CD8-positive, alpha-beta memory T cell (primary cell): ENCODE measurements at regions of chr1 and their contacts with region 1.

Region 1: GRCh38 chr1:25037174-25038074 is 107.3 kb upstream of the RUNX3 start:
- DNase-seq: peak; percentile 25 to 77 (median 60)
- H3K4me3 ChIP-seq: no peak overlapping the region
- H3K4me3 Mint-ChIP-seq: peak overlapping the region in 5 of 7 donors; percentile 11 to 64 (median 36)
- H3K27ac ChIP-seq: no peak overlapping the region
- H3K27ac Mint-ChIP-seq: peak overlapping the region in 7 of 8 donors; percentile 49 to 87 (median 63)
- H3K4me1 ChIP-seq: peaks cover 62% of the 10 kb centered on the region
- H3K4me1 Mint-ChIP-seq: peaks cover 40 to 51% (median 49%) of the 10 kb centered on the region in 3 donors
- H3K27me3 ChIP-seq: no peaks in the 10 kb centered on the region
- H3K27me3 Mint-ChIP-seq: peaks cover 0 to 1% of the 10 kb centered on the region in 2 donors

Region 2: GRCh38 chr1:24909388-24909898 is 128.0 kb before region 1 on chr1:
- CTCF ChIA-PET with region 1: interaction called, 23 read pairs
- POLR2A ChIA-PET with region 1: interaction called, 3 read pairs
- DNase-seq: no peak
- H3K4me3 ChIP-seq: no peak overlapping the region
- H3K4me3 Mint-ChIP-seq: peak overlapping the region; percentile 11 to 79 (median 53)
- H3K27ac ChIP-seq: peak overlapping the region; percentile 94
- H3K27ac Mint-ChIP-seq: peak overlapping the region; percentile 97 to 100 (median 100)
- H3K4me1 ChIP-seq: peaks cover 96% of the 10 kb centered on the region
- H3K4me1 Mint-ChIP-seq: peaks cover 66 to 96% (median 75%) of the 10 kb centered on the region in 3 donors
- H3K27me3 ChIP-seq: no peaks in the 10 kb centered on the region
- H3K27me3 Mint-ChIP-seq: peaks cover 0 to 4% of the 10 kb centered on the region in 2 donors

Region 3: DNA sequence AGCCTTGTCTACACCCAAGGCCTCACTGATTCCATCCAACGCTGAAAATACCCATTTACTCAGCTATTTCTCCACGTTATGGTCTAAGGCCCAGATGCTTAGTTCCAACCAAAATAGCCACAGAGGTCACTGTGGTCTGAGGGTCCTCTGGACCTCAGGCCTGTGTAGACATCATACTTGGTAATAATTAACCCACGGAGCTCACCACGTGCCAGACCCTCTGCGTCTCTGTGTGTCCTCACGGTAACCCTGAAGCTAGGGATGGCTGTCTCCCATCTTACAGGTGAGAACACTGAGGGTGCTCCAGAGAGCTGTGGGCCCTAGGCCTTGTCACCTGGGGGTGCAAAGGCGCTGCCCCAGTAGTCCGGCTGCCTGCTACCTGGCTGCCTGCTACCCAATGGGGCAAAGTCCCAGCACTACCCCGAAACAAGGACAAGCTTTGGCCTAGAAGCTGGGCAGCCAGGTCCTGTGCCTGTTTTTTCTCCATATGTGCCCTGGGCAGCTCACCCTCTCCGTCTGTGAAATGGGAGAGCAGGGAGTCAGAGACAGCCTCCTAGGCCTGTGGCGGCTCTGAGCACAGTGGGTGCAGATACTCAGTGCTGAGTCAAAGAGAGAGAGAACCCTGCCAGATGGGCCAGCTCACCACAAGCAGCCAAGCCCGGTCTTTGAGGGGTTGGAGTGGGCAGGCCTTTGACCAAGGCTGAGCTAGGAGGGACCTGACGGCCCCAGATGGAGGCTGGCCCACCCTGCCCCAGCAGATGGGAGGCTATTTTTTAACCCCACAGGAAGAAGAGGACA is 90.4 kb before region 1 on chr1:
- CTCF ChIA-PET with region 1: interaction called, 15 read pairs
- POLR2A ChIA-PET with region 1: no interaction called
- DNase-seq: no peak
- H3K4me3 ChIP-seq: no peak overlapping the region
- H3K4me3 Mint-ChIP-seq: peak overlapping the region in 1 of 7 donors; percentile 31
- H3K27ac ChIP-seq: no peak overlapping the region
- H3K27ac Mint-ChIP-seq: peak overlapping the region in 6 of 8 donors; percentile 23 to 78 (median 68)
- H3K4me1 ChIP-seq: peaks cover 9% of the 10 kb centered on the region
- H3K4me1 Mint-ChIP-seq: peaks cover 34 to 81% (median 48%) of the 10 kb centered on the region in 3 donors
- H3K27me3 ChIP-seq: no peaks in the 10 kb centered on the region
- H3K27me3 Mint-ChIP-seq: peaks cover 0 to under 1% of the 10 kb centered on the region in 2 donors

Region 4: GRCh38 chr1:24964811-24965570 is 72.4 kb before region 1 on chr1:
- CTCF ChIA-PET with region 1: interaction called, 205 read pairs
- POLR2A ChIA-PET with region 1: interaction called, 22 read pairs
- DNase-seq: peak; percentile 82 to 98 (median 93)
- H3K4me3 ChIP-seq: peak overlapping the region; percentile 53
- H3K4me3 Mint-ChIP-seq: peak overlapping the region; percentile 77 to 94 (median 88)
- H3K27ac ChIP-seq: peak overlapping the region; percentile 60
- H3K27ac Mint-ChIP-seq: peak overlapping the region; percentile 91 to 98 (median 95)
- H3K4me1 ChIP-seq: peaks cover 54% of the 10 kb centered on the region
- H3K4me1 Mint-ChIP-seq: peaks cover 65 to 80% (median 69%) of the 10 kb centered on the region in 3 donors
- H3K27me3 ChIP-seq: no peaks in the 10 kb centered on the region
- H3K27me3 Mint-ChIP-seq: peaks cover 0 to 3% of the 10 kb centered on the region in 2 donors

Region 5: DNA sequence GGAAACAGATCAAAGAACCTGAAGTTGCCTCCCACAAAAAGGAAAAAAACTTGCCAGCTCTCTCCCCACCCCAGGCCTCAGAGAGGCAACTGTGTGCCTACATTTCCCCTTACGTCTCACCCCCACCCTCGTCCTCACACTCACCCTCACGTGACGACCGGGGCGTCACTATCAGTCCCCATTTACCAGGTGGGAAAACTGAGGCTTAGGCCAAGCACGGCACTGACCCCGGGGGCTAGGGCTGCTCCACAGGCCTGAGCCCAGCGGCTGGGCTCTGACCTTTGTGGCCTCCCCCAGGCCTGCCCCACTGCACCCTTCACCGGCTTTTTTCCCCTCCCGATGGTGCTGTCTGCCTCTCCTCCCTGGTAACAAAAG is 55.8 kb before region 1 on chr1:
- CTCF ChIA-PET with region 1: interaction called, 12 read pairs
- POLR2A ChIA-PET with region 1: no interaction called
- DNase-seq: peak in 4 of 5 donors; percentile 44 to 73 (median 52)
- H3K4me3 ChIP-seq: no peak overlapping the region
- H3K4me3 Mint-ChIP-seq: peak overlapping the region in 6 of 7 donors; percentile 2 to 86 (median 55)
- H3K27ac ChIP-seq: no peak overlapping the region
- H3K27ac Mint-ChIP-seq: peak overlapping the region in 7 of 8 donors; percentile 52 to 89 (median 80)
- H3K4me1 ChIP-seq: peaks cover 75% of the 10 kb centered on the region
- H3K4me1 Mint-ChIP-seq: peaks cover 83 to 93% (median 89%) of the 10 kb centered on the region in 3 donors
- H3K27me3 ChIP-seq: no peaks in the 10 kb centered on the region
- H3K27me3 Mint-ChIP-seq: no peaks in the 10 kb centered on the region

Region 6: DNA sequence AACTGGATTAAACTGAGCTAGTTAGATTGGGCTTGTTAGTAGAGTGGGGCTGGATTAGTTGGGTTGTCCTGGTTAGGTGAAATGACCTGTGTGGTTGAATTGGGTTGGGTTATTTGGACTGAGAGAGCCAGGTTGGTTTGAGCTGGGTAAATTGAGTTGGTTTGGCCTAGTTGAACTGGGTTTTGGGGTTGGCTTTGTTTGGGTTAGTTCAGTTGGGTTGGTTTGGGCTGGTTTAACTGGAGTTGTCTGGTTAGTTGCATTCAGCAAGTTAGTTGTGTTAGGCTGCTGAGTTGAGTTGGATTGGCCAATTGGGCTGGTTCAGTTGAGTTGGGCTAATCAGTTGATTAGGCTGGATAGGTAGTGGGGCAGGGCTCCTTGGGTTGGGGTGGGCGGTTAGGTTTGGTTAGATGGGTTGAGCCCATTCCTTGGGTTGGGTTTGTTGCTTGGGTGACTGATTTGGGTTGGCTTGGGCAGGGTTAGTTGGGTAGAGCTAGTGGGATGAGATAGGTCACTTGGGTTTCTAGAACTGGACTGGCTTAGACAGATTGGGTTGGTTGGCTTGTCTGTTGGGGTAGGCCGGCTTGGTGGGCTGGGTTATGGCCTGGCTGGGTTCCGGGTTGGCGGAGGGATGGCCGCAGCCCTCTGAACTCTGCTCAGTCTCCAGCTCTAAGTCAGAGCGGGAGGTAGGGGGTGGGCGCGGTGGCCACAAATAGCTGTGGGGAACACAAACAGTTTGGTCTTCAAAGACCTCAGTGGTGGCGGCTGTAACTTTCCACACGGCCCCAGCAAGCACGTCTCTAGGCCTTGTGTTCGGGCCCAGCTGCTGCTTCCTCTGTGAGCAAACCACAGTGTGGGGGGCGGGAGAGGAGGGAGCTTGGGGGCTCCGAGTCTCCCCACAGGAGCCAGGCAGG is 40.2 kb before region 1 on chr1:
- CTCF ChIA-PET with region 1: interaction called, 52 read pairs
- POLR2A ChIA-PET with region 1: interaction called, 3 read pairs
- DNase-seq: peak in 4 of 5 donors; percentile 35 to 85 (median 74)
- H3K4me3 ChIP-seq: peak overlapping the region; percentile 2
- H3K4me3 Mint-ChIP-seq: peak overlapping the region; percentile 5 to 74 (median 58)
- H3K27ac ChIP-seq: no peak overlapping the region
- H3K27ac Mint-ChIP-seq: peak overlapping the region; percentile 70 to 94 (median 90)
- H3K4me1 ChIP-seq: peaks cover 68% of the 10 kb centered on the region
- H3K4me1 Mint-ChIP-seq: peaks cover 88 to 93% (median 92%) of the 10 kb centered on the region in 3 donors
- H3K27me3 ChIP-seq: no peaks in the 10 kb centered on the region
- H3K27me3 Mint-ChIP-seq: no peaks in the 10 kb centered on the region

Region 7: GRCh38 chr1:25099343-25099951 is 62.0 kb after region 1 on chr1:
- CTCF ChIA-PET with region 1: interaction called, 114 read pairs
- POLR2A ChIA-PET with region 1: interaction called, 4 read pairs
- DNase-seq: peak; percentile 22 to 78 (median 44)
- H3K4me3 ChIP-seq: peak overlapping the region; percentile 30
- H3K4me3 Mint-ChIP-seq: peak overlapping the region; percentile 34 to 89 (median 76)
- H3K27ac ChIP-seq: peak overlapping the region; percentile 0
- H3K27ac Mint-ChIP-seq: peak overlapping the region; percentile 25 to 95 (median 90)
- H3K4me1 ChIP-seq: peaks cover 71% of the 10 kb centered on the region
- H3K4me1 Mint-ChIP-seq: peaks cover 71 to 78% (median 75%) of the 10 kb centered on the region in 3 donors
- H3K27me3 ChIP-seq: no peaks in the 10 kb centered on the region
- H3K27me3 Mint-ChIP-seq: no peaks in the 10 kb centered on the region